Heart right ventricle (tissue), 16 donors: ENCODE measurements at regions of chr9 and their contacts with region 1.

Region 1: DNA sequence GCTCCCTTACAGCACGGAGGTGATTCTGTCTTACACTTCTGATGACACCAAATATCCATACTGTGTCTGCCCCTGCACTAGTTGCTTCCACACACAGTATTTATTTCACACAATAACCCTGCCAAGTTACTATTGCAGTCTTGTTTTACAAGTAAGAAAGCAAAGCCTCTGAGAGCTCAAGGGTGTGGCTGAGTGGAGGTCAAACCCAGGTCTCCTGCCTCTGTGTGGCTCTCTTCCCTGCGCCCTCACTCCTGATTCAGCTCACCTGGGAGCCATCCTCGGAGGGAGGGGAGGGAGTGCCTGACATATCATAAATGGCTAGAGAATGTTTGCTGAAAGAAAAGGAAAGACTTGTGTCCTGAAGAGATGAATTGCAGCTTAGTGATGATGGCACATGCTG is 41.0 kb downstream of the MVB12B start:
- DNase-seq: no peak
- ATAC-seq: no peak
- H3K4me3 ChIP-seq: no peak overlapping the region
- H3K27ac ChIP-seq: no peak overlapping the region
- H3K4me1 ChIP-seq: peaks cover 0 to 26% (median 1%) of the 10 kb centered on the region in 9 donors
- H3K27me3 ChIP-seq: no peaks in the 10 kb centered on the region
- CTCF ChIP-seq: no peak

Region 2: DNA sequence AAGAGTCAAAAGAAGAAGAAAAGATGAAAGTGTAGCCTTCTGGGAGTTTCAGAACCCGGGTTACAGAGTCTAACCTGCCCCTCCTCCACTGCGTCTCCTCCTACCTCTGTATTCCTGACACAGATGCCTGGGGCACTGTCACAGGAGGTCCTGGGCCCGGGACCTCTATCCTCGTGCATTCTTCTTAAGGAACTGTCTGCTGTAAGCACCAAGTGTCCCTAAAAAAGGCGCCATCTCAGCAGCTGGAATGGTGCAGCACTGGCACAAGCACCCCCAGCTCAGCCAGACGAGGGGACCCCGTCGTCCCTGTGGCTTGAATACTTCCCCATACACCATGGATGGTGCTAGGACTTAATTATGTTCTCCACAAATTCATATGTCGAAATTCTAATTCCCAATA is 76.7 kb before region 1 on chr9:
- intact Hi-C with region 1: no loop called
- DNase-seq: no peak
- ATAC-seq: no peak
- H3K4me3 ChIP-seq: no peak overlapping the region
- H3K27ac ChIP-seq: no peak overlapping the region
- H3K4me1 ChIP-seq: no peaks in the 10 kb centered on the region
- H3K27me3 ChIP-seq: peaks cover 0 to 23% (median 4%) of the 10 kb centered on the region in 7 donors
- CTCF ChIP-seq: no peak

Region 3: GRCh38 chr9:126309427-126310189 is 58.0 kb before region 1 on chr9:
- intact Hi-C with region 1: no loop called
- DNase-seq: no peak
- ATAC-seq: no peak
- H3K4me3 ChIP-seq: no peak overlapping the region
- H3K27ac ChIP-seq: no peak overlapping the region
- H3K4me1 ChIP-seq: no peaks in the 10 kb centered on the region
- H3K27me3 ChIP-seq: peaks cover 0 to 3% (median 0%) of the 10 kb centered on the region in 7 donors
- CTCF ChIP-seq: no peak

Region 4: DNA sequence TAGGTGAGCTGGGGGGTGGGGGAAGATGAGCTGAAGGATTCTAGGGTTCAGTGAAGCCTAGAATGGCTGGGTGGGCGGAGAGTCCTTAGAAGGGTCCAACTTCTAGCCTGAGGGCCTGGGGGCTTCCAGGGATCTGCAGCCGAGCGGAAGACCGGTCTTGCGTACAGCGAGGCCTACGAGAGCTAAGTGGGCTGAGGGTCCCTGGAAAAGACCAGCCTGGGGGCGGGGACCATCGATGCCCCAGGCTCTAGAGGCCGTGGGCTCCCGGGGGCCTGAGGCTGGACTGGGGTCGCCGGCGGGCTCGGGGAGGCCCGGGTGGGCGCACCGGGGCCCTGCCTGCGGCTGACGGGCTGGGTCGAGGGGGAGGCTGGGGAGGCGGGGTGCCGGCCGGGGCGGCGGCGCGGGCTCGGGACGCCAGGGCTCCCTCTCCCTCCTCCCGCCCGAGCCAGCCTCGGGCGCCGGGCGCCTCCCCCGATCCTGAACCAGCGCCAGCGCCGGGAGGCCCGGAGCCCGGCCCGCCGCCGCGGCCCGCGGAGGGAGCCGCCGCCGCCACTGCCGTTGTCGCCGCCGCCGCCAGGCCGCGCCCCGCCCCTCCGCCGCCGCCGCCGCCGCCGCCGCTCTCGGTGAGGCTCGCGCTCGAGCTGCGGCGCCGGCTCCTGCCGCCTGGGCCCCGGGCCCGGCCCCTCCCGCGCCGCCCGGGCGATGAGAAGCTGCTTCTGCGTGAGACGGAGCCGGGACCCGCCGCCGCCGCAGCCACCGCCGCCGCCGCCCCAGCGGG is 41.2 kb before region 1 on chr9 and contains the start of gene MVB12B:
- intact Hi-C with region 1: loop called in 1 of 10 experiments (anchors 2 kb)
- DNase-seq: peak in 1 of 2 donors; percentile 59
- ATAC-seq: peak in 7 of 8 donors; percentile 15 to 73 (median 53)
- H3K4me3 ChIP-seq: peak within 1 kb of the TSS; percentile 42 to 86 (median 70)
- H3K27ac ChIP-seq: peak within 1 kb of the TSS; percentile 38 to 90 (median 80)
- H3K4me1 ChIP-seq: peaks cover 3 to 48% (median 22%) of the 10 kb centered on the region in 9 donors
- H3K27me3 ChIP-seq: no peaks in the 10 kb centered on the region
- CTCF ChIP-seq: no peak
- total RNA-seq, gene MVB12B: 8.4 to 16.5 (median 11.2) TPM